Posterior vena cava (tissue), 2 donors: ENCODE measurements at regions of chr18 and their contacts with region 1.

Region 1: DNA sequence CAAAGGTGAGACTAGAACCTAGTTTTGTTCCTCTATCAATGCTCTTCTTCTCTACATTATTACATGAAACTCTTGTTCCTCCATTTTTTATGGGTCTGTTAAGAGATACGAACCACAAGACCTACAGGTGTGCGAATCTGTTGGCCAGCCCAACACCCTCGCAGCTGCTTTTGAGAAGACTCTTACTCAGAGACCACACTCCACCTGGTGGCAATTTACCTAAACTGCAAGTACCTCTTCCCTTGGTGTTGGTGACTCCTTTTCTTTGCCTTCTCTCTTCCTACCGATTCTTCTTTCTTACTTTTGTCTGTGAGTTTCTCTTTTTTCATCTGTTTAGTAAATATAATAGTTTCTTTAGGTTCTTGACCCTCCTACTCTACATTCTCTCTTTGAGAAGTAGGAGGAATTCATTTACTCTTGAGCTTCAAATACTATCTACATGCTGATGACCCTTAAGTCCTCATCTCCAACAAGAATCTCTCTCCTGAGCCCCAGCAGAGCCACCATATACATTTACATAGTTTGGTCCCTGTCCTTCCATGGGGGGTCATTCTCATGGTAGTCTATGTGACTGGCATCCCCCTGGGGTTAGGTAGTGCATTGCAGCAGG is 81.8 kb upstream of the GAREM1 start:
- DNase-seq: no peak

Region 2: DNA sequence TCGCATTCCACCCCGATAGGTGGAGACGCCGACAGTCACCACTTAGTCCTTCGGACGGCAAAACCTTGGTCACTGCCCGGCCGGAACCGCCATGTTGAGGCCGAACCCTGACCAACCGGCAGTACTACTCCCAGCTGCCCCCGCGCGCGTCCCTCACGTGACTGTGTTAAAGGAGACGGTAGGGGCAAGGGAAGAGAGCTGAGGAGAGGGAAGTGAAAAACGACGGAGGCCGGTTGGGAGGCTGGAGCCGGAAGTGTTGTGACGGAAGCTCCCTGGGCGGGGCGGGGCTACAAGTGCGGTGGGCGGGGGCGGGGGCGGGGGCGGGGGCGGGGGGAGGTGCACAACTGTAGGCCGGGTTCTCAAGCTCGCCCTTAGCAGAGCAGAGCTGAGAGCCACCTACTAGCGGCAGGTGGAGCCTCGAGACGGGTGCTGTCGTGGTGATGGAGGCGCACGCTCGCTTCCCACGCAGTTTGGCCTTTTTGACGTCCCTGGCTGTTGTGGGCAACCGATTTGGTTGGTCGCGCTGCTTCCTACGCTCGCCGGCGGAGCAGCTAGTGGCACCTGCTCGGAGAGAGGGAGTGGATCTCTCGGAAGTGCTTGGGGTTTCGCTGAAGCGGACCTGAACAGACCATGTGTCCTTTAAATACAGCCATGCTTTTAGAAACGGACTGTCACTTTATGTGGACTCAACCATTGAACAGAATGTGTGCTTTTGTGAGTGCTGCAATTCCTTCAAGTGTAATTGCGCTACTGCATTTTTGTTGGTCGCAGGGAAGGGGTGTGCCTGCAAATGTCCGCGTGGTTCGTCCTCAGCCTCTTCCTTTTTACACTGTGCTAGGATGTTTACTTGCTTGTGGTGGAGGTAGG is 609.3 kb before region 1 on chr18 and contains the start of gene TRAPPC8:
- intact Hi-C with region 1: loop called in 1 of 2 experiments (anchors 5 kb)
- DNase-seq: peak; percentile 99
- total RNA-seq, gene TRAPPC8: 34.1 to 46.3 TPM

Region 3: DNA sequence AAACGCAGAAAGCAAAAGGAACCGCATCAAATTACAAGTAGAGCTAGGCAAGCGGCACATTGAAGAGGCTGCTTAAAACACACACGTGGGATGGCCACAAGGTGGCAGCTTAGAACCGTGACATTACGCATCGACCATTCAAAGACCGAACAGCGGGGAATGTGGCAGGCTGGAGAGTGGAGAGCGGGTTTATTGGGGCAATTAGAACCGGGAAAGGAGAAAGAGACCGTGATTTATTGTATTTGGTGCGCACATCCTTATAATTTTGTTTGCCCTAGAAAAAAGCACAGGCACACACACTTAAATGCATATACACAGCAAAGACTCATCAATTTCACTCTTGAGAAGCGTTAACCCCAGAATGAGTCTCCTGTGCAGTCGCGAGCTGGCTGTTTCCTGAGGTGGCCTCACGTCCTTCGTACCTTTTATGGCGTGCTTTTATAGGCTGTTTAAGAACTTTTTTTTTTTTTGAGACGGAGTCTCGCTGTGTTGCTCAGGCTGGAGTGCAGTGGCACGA is 394.4 kb before region 1 on chr18:
- intact Hi-C with region 1: loop called (anchors 5 to 10 kb)
- DNase-seq: peak; percentile 91

Region 4: GRCh38 chr18:32271672-32272208 is 280.8 kb before region 1 on chr18:
- intact Hi-C with region 1: loop called in 1 of 2 experiments (anchors 10 kb)
- DNase-seq: no peak